A549 (cell line): ENCODE measurements at regions of chr20 and their contacts with region 1.

Region 1: DNA sequence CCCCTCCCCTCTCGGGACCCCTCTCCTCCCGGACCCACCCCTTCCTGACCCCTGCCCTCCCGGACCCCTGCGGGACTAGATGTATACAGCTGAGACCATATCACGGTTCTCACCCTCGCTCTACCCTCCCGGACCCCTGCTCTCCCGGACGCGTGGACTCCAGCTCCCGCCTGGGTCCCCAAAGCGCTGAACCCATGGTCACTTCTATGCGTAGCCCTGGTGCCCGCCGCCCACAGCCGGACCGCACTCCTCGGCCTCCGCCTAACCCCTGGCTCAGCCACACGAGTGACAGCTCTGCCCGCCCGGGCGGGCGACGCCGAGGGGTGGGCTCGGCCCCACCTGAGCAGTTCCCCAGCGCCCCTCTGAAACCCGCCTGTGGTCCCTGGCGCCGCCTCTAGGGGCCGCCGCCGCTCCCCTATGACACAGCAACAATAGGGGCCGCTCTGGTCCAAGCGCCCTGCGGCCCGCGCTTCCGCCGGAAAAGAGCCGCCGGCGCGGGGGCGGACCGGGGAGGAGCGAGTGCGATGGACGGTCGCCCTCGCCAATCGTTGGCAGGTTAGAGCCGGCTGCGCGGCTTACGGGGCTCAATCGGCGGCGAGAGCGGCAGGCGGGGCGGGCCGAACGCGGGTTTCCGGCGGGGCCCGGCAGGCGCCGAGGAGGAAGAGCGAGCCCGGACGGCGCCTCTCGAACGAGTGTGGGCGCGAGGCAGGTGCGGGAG is at the start of gene ADRM1:
- DNase-seq: peak; percentile 95 to 97
- ATAC-seq: peak; percentile 50 to 83
- H3K4me3 ChIP-seq: peak within 1 kb of the TSS; percentile 99
- H3K27ac ChIP-seq: peak within 1 kb of the TSS; percentile 97 to 99
- H3K4me1 ChIP-seq: peaks cover 34% of the 10 kb centered on the region
- CTCF ChIP-seq: peak; percentile 81
- EP300 ChIP-seq: no peak
- POLR2A ChIP-seq: peak; percentile 43
- RAD21 ChIP-seq: peak; percentile 48
- polyA plus RNA-seq, gene ADRM1: 68.9 and 87.9 TPM in 2 replicates

Region 2: DNA sequence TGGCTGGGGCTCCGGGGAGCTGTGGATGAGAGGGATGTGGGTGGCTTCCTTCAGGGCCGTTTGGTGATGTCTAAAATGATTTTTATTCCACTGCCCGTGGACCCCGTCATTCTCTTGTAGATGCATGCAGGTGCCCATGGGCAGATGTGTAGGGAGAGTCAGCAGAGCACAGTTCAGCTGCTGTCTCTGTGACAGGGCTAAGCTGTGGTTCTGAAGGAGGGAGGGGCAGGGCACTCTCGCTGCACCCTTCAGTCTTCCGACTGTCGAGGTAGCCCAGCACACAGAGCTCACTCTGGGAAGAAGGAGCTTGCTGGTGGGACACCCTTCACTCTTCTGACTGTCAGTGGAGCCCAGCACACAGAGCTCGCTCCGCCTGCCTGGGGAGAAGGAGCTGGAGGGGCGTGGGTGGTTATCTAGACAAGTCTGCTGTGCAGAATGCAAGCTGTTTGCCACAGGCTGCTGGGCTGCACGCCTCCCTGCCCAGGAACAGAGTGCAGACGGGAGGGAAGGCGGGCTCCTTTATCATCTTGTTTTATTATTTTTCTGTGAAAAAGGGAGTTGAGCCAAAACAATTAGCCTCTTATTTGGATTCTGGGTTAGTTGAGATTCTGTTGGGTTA is 28.1 kb before region 1 on chr20:
- CTCF ChIA-PET with region 1: no interaction called
- POLR2A ChIA-PET with region 1: no interaction called
- DNase-seq: no peak
- ATAC-seq: no peak
- H3K4me3 ChIP-seq: no peak overlapping the region
- H3K27ac ChIP-seq: no peak overlapping the region
- H3K4me1 ChIP-seq: no peaks in the 10 kb centered on the region
- CTCF ChIP-seq: no peak
- EP300 ChIP-seq: no peak
- POLR2A ChIP-seq: no peak
- RAD21 ChIP-seq: no peak

Region 3: DNA sequence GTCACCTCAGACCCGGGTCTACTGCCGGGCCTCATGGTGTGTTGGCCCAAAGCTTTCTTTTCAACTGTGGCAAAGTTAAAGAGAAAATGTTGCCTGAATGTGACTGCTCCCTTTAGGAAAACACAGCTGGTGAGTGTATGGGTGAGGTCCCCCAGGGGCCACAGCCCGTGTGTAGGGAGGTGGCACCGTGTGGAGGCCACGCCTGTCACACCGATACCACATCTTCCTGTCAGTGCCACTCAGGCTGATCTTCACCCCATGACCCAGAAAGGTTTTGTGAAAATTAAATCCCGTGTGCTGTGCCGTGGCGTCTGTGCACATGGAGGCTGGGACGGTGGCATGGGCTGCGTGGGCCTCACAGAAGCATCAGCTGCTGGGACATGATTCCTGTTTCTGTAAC is 10.4 kb before region 1 on chr20:
- CTCF ChIA-PET with region 1: interaction called, 10 read pairs
- POLR2A ChIA-PET with region 1: no interaction called
- DNase-seq: no peak
- ATAC-seq: no peak
- H3K4me3 ChIP-seq: no peak overlapping the region
- H3K27ac ChIP-seq: no peak overlapping the region
- H3K4me1 ChIP-seq: no peaks in the 10 kb centered on the region
- CTCF ChIP-seq: no peak
- EP300 ChIP-seq: no peak
- POLR2A ChIP-seq: no peak
- RAD21 ChIP-seq: no peak

Region 4: DNA sequence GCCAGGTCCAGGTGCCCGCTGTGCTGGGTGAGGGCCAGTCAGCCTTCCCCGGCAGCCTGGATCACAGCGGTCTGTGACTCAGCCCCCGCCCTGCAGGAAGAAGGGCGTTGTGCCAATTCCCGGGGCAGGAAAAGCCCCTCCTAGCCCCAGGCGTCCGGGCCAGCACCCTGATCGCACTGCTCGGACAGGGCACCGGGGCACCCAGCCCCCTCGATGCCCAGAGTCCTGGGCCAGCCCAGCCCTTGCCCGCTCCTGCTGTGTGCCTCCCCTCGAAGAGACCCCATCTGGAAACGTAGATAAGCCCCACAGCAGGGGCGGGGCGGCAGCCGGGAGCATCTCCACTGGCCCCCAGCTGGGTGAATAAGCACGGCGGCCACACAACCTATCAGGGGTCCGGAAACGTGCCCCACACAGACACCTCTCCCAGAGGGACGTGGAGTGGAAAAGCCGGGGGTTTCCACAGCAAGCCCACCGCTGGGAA is 54.7 kb after region 1 on chr20:
- CTCF ChIA-PET with region 1: interaction called, 42 read pairs
- POLR2A ChIA-PET with region 1: interaction called, 3 read pairs
- DNase-seq: peak in 1 of 2 experiments; percentile 77
- ATAC-seq: peak in 1 of 2 experiments; percentile 7; a peak in 3 of 6 replicates
- H3K4me3 ChIP-seq: peak overlapping the region; percentile 41; the same call in 2 of the 3 replicates
- H3K27ac ChIP-seq: peak overlapping the region; percentile 97 to 99
- H3K4me1 ChIP-seq: peaks cover 98% of the 10 kb centered on the region
- CTCF ChIP-seq: no peak
- EP300 ChIP-seq: peak in 1 of 2 experiments; percentile 46; a peak in 1 of 5 replicates
- POLR2A ChIP-seq: 0 out of 2 replicates have a peak, but pooled peaks have one; percentile 20
- RAD21 ChIP-seq: peak in 1 of 2 experiments; percentile 12; a peak in 1 of 5 replicates

Region 5: GRCh38 chr20:62368976-62369814 is 66.7 kb after region 1 on chr20:
- CTCF ChIA-PET with region 1: interaction called, 42 read pairs
- POLR2A ChIA-PET with region 1: interaction called, 4 read pairs
- DNase-seq: peak in 1 of 2 experiments; percentile 89
- ATAC-seq: peak; percentile 48 to 68
- H3K4me3 ChIP-seq: peak overlapping the region; percentile 100
- H3K27ac ChIP-seq: peak overlapping the region; percentile 97 to 99
- H3K4me1 ChIP-seq: peaks cover 49% of the 10 kb centered on the region
- CTCF ChIP-seq: peak; percentile 29; the same call in 2 of the 3 replicates
- EP300 ChIP-seq: peak; percentile 35 to 44; a peak in 2 of 5 replicates
- POLR2A ChIP-seq: peak; percentile 60
- RAD21 ChIP-seq: peak in 1 of 2 experiments; percentile 2; a peak in 2 of 5 replicates

Region 6: GRCh38 chr20:62694868-62695267 is 392.4 kb after region 1 on chr20:
- CTCF ChIA-PET with region 1: no interaction called
- POLR2A ChIA-PET with region 1: interaction called, 14 read pairs
- DNase-seq: no peak
- ATAC-seq: no peak
- H3K4me3 ChIP-seq: no peak overlapping the region
- H3K27ac ChIP-seq: no peak overlapping the region
- H3K4me1 ChIP-seq: no peaks in the 10 kb centered on the region
- CTCF ChIP-seq: no peak
- EP300 ChIP-seq: no peak
- POLR2A ChIP-seq: no peak
- RAD21 ChIP-seq: no peak